Activated naive CD8-positive, alpha-beta T cell treated with anti-CD3 and anti-CD28 coated beads, Interleukin-2, amount 10 ng/mL, durations not matched to agents 7 days and 5 days (primary cell): ENCODE measurements at regions of chr16 and their contacts with region 1.

Region 1: DNA sequence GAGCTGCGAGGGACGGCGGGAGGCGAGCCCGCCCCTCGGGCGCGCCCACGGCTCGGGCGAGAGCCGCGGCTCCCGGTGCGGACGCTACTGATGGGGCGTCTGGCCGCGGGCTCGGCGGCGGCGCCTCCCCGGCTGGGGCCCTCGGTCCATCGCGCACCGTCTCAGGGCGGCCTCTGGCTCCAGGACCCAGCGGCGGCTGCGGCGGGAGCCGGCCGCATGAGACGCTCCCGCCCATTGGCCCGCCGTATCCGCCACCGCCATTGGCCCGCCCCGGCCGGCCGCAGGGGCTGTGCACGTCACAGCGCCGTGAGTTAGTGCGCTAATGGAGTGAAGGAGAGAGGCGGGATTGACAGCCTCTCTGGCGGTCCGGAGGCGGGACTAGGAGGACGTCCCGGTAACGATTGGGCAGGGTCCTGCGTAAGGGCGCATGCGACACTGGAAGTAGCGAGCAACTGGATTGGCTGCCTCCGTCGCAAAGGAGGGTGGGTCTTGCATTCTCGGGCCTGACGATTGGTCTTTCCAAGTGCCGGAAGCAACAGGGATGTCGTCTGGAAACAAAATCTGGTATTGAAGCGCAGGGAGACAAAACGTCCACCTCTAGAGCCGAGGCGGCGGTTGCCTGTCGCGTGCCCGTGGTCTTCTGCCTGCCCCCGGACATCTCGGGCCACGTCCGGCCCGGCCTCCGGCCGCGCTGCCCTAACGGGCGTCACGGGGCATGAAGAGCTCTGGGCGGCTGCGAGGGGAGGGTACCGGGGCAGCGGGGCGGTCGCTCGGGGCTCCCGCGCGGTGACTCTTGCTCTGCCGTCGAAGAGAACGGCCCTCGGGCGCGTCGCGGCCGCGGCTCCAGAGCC is at the start of gene ANKRD11:
- DNase-seq: peak; percentile 99
- ATAC-seq: peak; percentile 92
- H3K4me3 Mint-ChIP-seq: peak within 1 kb of the TSS; percentile 92
- H3K27ac Mint-ChIP-seq: peak within 1 kb of the TSS; percentile 95
- H3K4me1 Mint-ChIP-seq: peaks cover 40% of the 10 kb centered on the region
- H3K27me3 Mint-ChIP-seq: no peaks in the 10 kb centered on the region
- total RNA-seq, gene ANKRD11: 213 to 217 TPM

Region 2: GRCh38 chr16:89315791-89316581 is 174.6 kb before region 1 on chr16:
- POLR2A ChIA-PET with region 1: interaction called, 13 read pairs
- DNase-seq: peak; percentile 78
- ATAC-seq: peak; percentile 92
- H3K4me3 Mint-ChIP-seq: peak overlapping the region; percentile 76
- H3K27ac Mint-ChIP-seq: peak overlapping the region; percentile 99
- H3K4me1 Mint-ChIP-seq: peaks cover 75% of the 10 kb centered on the region
- H3K27me3 Mint-ChIP-seq: no peaks in the 10 kb centered on the region

Region 3: DNA sequence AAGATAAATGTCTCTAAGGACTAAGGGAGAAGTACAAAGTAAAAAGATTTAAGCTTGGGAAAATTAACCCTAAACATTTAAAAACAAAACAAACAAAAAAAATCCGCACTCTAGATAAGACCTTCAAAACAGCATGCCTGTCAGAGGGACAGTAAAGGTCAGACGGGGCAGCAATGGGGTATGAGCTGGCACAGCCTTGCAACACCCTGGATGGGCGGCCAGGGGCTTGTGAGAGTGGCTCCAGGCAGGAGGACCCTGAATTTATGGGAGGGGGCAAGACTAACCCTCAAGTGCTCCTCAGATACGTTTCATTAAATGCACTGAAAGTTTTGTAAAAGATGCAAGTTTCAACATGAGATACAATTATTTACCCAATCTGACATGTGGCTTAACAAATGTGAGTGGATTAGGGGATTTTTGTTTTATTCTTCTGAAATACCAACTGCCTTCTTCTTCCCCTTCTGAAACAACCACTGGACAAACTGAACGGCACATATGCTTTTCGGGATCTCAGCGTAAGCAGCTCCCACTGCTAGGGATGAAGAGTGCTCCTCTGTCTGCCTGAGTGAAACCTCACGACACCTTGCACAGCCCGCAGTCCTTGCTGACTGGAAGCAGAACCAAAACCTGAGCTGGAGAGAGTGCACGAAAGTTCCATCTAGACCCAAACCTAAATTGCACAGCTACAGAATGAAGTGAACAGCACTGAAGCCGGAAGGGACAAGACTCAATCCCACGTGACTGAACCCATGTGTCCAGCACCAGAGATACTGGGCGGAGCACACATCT is 128.7 kb before region 1 on chr16:
- POLR2A ChIA-PET with region 1: interaction called, 11 read pairs
- DNase-seq: no peak
- ATAC-seq: no peak
- H3K4me3 Mint-ChIP-seq: peak overlapping the region; percentile 79
- H3K27ac Mint-ChIP-seq: peak overlapping the region; percentile 87
- H3K4me1 Mint-ChIP-seq: peaks cover 80% of the 10 kb centered on the region
- H3K27me3 Mint-ChIP-seq: no peaks in the 10 kb centered on the region

Region 4: DNA sequence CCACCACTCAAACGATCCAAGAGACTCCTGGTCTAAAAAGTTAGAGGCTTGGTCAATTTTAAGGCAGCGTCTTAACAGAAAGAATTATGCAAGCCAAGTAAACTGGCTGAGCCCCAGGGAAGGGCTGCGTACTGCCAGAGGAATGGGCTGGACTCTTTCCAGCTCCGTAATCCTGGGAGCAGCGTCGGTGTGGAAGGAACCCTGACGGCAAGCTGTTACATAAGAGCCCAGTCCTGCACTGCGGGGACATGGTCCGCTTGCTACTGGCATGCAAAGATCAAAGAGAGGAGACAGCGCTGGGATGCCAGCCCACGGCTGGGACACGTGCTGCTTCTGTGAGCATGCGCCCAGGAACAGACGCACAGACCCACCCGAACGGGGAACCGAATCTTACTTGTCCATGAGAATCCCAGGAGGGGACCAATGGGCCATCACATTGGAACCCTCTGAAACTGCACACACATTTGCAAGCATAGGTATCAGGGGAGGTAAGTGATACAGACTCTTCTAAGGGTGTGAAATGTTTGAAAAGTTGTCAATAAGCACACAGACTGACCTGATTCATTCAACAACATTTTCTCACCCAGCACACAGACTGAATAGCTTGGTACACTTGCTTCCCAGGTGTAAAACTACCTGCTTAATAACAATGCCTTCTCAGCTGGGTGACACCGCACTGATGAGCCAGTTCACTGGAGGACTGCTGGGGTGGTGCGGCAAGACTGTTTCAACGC is 95.3 kb before region 1 on chr16:
- POLR2A ChIA-PET with region 1: no interaction called
- DNase-seq: no peak
- ATAC-seq: no peak
- H3K4me3 Mint-ChIP-seq: no peak overlapping the region
- H3K27ac Mint-ChIP-seq: no peak overlapping the region
- H3K4me1 Mint-ChIP-seq: peaks cover 23% of the 10 kb centered on the region
- H3K27me3 Mint-ChIP-seq: no peaks in the 10 kb centered on the region

Region 5: GRCh38 chr16:89455178-89455577 is 35.4 kb before region 1 on chr16:
- POLR2A ChIA-PET with region 1: interaction called, 11 read pairs
- DNase-seq: no peak
- ATAC-seq: peak; percentile 87
- H3K4me3 Mint-ChIP-seq: peak overlapping the region; percentile 41
- H3K27ac Mint-ChIP-seq: peak overlapping the region; percentile 43
- H3K4me1 Mint-ChIP-seq: peaks cover 62% of the 10 kb centered on the region
- H3K27me3 Mint-ChIP-seq: no peaks in the 10 kb centered on the region

Region 6: GRCh38 chr16:89507834-89508590 is 17.4 kb after region 1 on chr16 and contains the start of gene SPG7:
- POLR2A ChIA-PET with region 1: interaction called, 88 read pairs
- DNase-seq: peak; percentile 98
- ATAC-seq: peak; percentile 79
- H3K4me3 Mint-ChIP-seq: peak within 1 kb of the TSS; percentile 94
- H3K27ac Mint-ChIP-seq: peak within 1 kb of the TSS; percentile 95
- H3K4me1 Mint-ChIP-seq: peaks cover 29% of the 10 kb centered on the region
- H3K27me3 Mint-ChIP-seq: no peaks in the 10 kb centered on the region
- total RNA-seq, gene SPG7: 112 to 113 TPM